Calu3 (cell line): ENCODE measurements at regions of chr3 and their contacts with region 1.

Region 1: DNA sequence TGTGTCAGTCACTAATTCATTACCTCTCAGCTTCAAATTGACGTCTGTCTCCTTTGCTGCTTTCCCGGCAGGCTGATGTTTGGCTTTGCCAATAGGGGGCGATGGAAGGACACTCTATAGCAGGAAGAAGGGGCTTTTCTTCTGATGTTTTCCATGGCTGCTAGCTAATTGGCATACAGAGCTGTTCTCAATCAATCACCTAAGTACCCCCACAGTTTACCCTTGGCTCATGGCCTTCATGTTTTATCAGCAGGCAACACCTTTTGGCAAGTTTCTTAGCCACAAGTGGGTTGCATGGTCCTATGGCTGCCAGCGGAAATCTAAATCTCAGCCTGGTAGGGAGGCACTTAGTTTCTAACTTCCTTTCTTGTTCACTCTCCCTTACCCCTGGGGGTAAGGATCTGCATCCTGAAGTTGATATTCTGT is 45.0 kb downstream of the ESYT3 start:
- DNase-seq: peak; percentile 79
- H3K4me3 Mint-ChIP-seq: no peak overlapping the region
- H3K27ac Mint-ChIP-seq: no peak overlapping the region
- H3K4me1 Mint-ChIP-seq: no peaks in the 10 kb centered on the region
- H3K27me3 Mint-ChIP-seq: no peaks in the 10 kb centered on the region
- CTCF ChIP-seq: peak; percentile 92

Region 2: DNA sequence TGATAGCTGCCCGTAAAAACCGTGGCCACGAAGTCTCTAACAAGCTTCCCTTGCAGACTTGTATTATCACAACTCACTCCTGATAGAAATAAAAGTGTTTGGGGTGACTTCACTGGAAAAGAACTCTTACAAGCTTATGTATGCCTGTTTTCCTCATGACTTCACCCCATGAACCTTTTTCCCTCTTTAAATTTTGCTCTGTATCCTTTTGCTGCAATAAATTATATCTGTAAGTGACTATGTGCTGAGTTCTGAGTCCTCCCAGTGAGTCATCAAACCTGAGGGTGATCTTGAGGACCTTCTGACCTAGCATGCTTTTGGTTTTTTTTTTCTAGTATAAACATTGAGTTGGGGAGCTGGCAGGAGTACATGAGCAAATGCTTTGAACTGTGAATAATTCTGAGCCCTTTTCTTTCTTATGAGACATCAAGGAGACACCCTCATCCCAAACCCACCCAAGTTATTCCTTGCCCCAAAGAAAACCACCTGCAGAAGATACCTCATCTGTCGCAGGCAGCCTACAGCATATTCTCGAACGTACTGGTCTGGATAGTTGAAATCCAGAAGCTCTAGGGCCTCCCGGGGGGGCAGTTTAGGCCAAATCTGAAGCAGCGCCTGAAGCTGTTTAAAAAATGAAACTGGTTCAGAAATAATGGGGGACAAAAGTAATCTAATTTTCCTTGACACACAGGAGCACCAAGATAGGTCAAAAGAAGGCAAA is 215.0 kb after region 1 on chr3:
- CTCF ChIA-PET with region 1: interaction called, 3 read pairs
- intact Hi-C with region 1: loop called (anchors 5 kb)
- DNase-seq: no peak
- H3K4me3 Mint-ChIP-seq: no peak overlapping the region
- H3K27ac Mint-ChIP-seq: no peak overlapping the region
- H3K4me1 Mint-ChIP-seq: peaks cover 13% of the 10 kb centered on the region
- H3K27me3 Mint-ChIP-seq: no peaks in the 10 kb centered on the region
- CTCF ChIP-seq: no peak

Region 3: GRCh38 chr3:139074565-139075115 is 595.2 kb after region 1 on chr3:
- CTCF ChIA-PET with region 1: no interaction called
- intact Hi-C with region 1: no loop called
- DNase-seq: no peak
- H3K4me3 Mint-ChIP-seq: no peak overlapping the region
- H3K27ac Mint-ChIP-seq: no peak overlapping the region
- H3K4me1 Mint-ChIP-seq: no peaks in the 10 kb centered on the region
- H3K27me3 Mint-ChIP-seq: peaks cover 30% of the 10 kb centered on the region
- CTCF ChIP-seq: no peak